ENCODE measurements at regions of chr9 and their contacts with region 1.

Region 1: GRCh38 chr9:131334629-131335367 is 45.3 kb downstream of the PLPP7 start:
- DNase-seq: peak in 1 of 2 donors; percentile 41
- H3K4me3 ChIP-seq: no peak overlapping the region
- H3K27ac ChIP-seq: no peak overlapping the region
- H3K4me1 ChIP-seq: peaks cover 0 to 3% (median 0%) of the 10 kb centered on the region in 4 donors
- H3K27me3 ChIP-seq: no peaks in the 10 kb centered on the region
- CTCF ChIP-seq: no peak
- EP300 ChIP-seq: no peak
- POLR2A ChIP-seq: no peak

Region 2: GRCh38 chr9:131178382-131178781 is 156.4 kb before region 1 on chr9:
- intact Hi-C with region 1: loop called (anchors 2 kb)
- DNase-seq: peak; percentile 63 to 84
- H3K4me3 ChIP-seq: no peak overlapping the region
- H3K27ac ChIP-seq: no peak overlapping the region
- H3K4me1 ChIP-seq: peaks cover 0 to 19% (median 4%) of the 10 kb centered on the region in 4 donors
- H3K27me3 ChIP-seq: no peaks in the 10 kb centered on the region
- CTCF ChIP-seq: peak in 5 of 7 experiments; percentile 74 to 92 (median 88)
- EP300 ChIP-seq: no peak
- POLR2A ChIP-seq: no peak

Measured in stomach (tissue), 19 donors.